Mammary epithelial cell (primary cell): ENCODE measurements at regions of chr2 and their contacts with region 1.

Region 1: DNA sequence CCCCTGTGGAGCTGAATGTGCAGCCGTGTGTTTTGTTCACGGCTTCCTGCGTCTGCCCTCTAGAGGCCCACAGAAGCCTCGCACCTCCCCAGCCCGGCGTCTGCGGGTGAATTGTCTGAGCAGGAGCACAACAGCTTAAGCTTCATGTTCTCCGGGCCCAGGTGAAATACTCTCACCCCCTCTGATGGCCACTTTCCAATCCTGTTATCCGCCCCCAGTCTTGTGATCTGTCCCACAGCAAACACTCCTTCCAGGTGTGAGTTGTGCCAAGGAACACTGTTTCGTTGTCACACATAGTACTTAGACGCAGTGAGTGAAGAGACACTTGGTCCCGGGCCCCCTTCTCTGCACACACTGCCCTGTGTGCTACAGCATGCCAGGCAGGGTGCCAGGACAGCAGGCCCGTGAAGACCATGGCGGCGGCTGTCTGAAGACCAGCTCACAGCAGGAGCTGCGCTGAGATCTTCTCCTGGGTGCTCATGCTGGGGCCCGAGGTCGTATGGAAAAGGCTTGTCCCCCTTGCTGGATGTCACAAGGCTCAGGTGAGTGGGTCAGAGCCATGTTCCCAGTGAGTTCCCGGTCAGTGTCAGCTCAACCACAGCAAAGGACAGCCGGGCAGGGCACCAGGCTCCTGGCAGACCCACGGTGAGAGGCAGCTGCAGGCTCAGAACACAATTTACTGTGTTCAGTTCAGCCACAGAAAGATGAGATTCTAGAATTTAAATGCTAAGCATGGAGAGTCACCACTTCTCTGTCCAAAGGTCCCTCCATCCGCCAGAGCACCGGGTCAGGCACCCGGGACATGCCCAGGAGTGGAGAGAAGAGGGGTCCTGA is 6.8 kb upstream of the PXDN start:
- DNase-seq: peak; percentile 68
- H3K4me3 ChIP-seq: no peak overlapping the region
- H3K27ac ChIP-seq: no peak overlapping the region
- H3K4me1 ChIP-seq: peaks cover 5% of the 10 kb centered on the region
- H3K27me3 ChIP-seq: no peaks in the 10 kb centered on the region
- CTCF ChIP-seq: peak; percentile 80 to 92

Region 2: DNA sequence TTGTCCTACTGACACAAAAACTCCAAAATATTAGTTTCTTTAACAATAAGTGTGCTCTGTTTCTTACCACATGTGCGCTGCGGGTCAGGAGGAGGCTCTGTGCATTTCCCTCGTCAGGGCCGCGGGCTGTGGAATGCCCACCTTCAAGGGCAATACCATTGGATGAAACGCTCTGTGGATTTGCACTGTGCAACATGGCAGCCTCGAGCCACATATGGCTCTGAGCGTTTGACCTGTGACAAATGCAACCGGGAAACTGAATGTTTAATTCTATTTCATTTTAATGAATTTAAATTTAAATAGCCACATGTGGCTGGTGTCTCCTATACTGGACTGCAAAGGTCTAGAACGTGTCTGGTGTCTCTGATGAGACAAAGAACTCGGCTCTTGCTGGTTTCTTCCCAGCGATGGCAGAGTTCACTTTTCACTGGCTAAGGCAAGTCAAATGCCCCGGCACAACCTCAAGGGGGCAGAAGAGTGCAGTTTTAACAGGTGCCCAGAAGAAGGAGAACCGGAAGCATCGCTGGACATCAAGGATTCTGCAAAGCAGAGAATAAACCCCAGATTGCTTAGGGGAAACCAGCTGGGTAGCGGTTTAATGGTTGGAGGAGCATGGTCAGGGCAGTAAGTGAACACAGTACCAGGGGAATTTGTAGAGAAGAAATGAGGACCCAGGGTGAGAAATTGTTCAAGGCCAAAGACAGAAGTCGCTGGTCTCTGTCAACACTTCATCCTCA is 1037.0 kb before region 1 on chr2:
- CTCF ChIA-PET with region 1: no interaction called
- dilution Hi-C with region 1: no loop called
- in situ Hi-C with region 1: loop called (anchors 25 kb)
- intact Hi-C with region 1: loop called (anchors 10 kb)
- DNase-seq: peak; percentile 25
- H3K4me3 ChIP-seq: no peak overlapping the region
- H3K27ac ChIP-seq: no peak overlapping the region
- H3K4me1 ChIP-seq: no peaks in the 10 kb centered on the region
- H3K27me3 ChIP-seq: no peaks in the 10 kb centered on the region
- CTCF ChIP-seq: peak; percentile 66 to 76

Region 3: GRCh38 chr2:1051064-1051983 is 699.8 kb before region 1 on chr2:
- CTCF ChIA-PET with region 1: no interaction called
- dilution Hi-C with region 1: no loop called
- in situ Hi-C with region 1: no loop called
- intact Hi-C with region 1: loop called (anchors 5 kb)
- DNase-seq: no peak
- H3K4me3 ChIP-seq: no peak overlapping the region
- H3K27ac ChIP-seq: no peak overlapping the region
- H3K4me1 ChIP-seq: peaks cover 7% of the 10 kb centered on the region
- H3K27me3 ChIP-seq: no peaks in the 10 kb centered on the region
- CTCF ChIP-seq: peak; percentile 7 to 27